ENCODE measurements at regions of chr5 and their contacts with region 1.

Region 1: GRCh38 chr5:141960449-141961202 is 2.6 kb upstream of the PCDH12 start:
- DNase-seq: peak; percentile 94
- ATAC-seq: peak; percentile 88
- H3K4me3 Mint-ChIP-seq: peak overlapping the region; percentile 44
- H3K27ac Mint-ChIP-seq: peak overlapping the region; percentile 80
- H3K4me1 Mint-ChIP-seq: peaks cover 45% of the 10 kb centered on the region
- H3K27me3 Mint-ChIP-seq: no peaks in the 10 kb centered on the region
- CTCF ChIP-seq: peak; percentile 62

Region 2: GRCh38 chr5:141664732-141665461 is 295.7 kb before region 1 on chr5:
- CTCF ChIA-PET with region 1: interaction called, 47 read pairs
- POLR2A ChIA-PET with region 1: no interaction called
- intact Hi-C with region 1: no loop called
- DNase-seq: peak; percentile 85
- ATAC-seq: peak; percentile 95
- H3K4me3 Mint-ChIP-seq: no peak overlapping the region
- H3K27ac Mint-ChIP-seq: no peak overlapping the region
- H3K4me1 Mint-ChIP-seq: peaks cover 3% of the 10 kb centered on the region
- H3K27me3 Mint-ChIP-seq: no peaks in the 10 kb centered on the region
- CTCF ChIP-seq: peak; percentile 89

Region 3: DNA sequence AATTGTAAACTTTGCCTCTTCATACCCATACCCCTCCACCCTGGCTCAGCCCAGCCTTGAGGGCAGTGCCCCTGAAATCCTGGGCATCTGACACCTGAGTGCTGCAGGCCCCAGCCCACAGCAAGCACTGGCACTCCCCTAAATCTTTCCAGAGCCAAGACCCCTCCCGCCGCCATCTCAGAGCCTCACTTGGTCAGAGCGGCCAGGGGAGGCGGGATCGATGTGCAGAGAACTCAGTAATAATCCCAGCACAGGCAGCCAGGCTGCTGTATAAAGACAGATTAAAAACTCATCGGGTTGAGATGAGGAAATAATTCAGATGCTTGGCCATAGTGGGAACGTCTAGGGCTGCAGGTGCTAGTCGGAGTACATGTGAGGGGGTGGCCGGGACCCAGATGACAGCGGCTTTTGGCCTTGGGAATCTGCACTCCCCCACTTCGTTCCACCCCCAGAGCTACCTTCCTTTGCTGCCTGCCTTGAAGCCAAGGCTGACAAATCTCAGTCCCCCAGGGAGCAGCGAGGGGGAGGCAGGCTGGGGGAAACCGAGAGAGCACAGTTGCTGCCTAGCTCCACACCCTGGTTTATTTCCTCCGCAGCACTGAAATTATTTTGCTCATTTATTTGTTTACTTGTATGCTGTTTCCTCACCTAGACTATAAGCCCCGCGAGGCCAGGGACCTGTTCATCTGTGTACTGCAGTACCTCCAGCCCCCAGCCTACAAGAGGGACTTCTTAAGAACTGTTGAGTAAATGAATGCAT is 259.1 kb before region 1 on chr5:
- CTCF ChIA-PET with region 1: interaction called, 204 read pairs
- POLR2A ChIA-PET with region 1: interaction called, 3 read pairs
- intact Hi-C with region 1: no loop called
- DNase-seq: peak; percentile 47
- ATAC-seq: peak; percentile 46
- H3K4me3 Mint-ChIP-seq: peak overlapping the region; percentile 56
- H3K27ac Mint-ChIP-seq: no peak overlapping the region
- H3K4me1 Mint-ChIP-seq: peaks cover 11% of the 10 kb centered on the region
- H3K27me3 Mint-ChIP-seq: peaks cover 32% of the 10 kb centered on the region
- CTCF ChIP-seq: no peak

Region 4: GRCh38 chr5:141889282-141889871 is 71.2 kb before region 1 on chr5:
- CTCF ChIA-PET with region 1: interaction called, 94 read pairs
- POLR2A ChIA-PET with region 1: no interaction called
- intact Hi-C with region 1: loop called (anchors 5 kb)
- DNase-seq: peak; percentile 16
- ATAC-seq: no peak
- H3K4me3 Mint-ChIP-seq: no peak overlapping the region
- H3K27ac Mint-ChIP-seq: no peak overlapping the region
- H3K4me1 Mint-ChIP-seq: no peaks in the 10 kb centered on the region
- H3K27me3 Mint-ChIP-seq: peaks cover 29% of the 10 kb centered on the region
- CTCF ChIP-seq: peak; percentile 32

Region 5: DNA sequence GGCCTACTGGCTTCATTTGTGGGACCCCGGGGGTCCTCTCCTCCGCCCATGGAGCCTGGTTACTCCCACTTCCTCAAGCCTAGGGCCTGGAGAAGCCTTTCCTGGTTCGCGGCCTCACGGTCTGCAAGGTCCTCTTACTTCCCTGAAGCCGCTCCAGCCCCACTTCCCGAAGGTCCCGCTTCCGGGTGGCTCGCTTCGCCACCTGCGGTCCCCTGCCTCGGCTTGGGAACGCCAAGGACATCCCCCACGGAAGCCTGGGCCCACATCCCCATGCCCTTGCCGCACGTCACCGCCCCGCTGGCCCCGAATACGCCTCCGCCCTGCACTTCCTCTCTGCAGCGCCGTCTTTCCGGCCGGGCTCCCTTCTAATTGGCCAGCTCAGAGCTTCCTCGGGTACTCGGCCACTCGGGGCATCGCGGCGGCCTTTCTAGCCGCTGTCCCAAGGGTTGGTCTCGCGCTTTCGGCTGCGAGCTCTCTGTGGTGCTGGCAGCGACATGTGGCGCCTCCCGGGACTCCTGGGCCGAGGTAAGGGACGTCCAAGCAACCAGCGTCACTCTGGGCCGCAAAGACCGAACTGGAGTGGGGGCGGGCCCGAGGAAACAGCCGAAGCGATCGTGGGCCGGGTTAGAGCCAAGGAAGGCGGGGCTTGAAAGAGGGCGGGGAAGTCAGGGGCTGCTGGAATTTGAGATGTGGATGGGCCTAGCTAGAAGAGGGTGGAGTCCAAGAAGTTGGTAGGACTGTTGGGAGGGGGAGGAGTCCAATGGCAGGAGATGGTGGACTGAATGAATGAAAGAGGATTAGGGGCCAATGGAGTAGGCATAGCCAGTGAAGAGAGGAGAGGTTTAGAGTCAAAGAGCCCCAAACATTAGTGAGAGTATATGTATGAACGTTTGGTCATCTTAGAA is 36.9 kb before region 1 on chr5 and contains the start of gene DELE1:
- CTCF ChIA-PET with region 1: interaction called, 42 read pairs
- POLR2A ChIA-PET with region 1: interaction called, 5 read pairs
- intact Hi-C with region 1: no loop called
- DNase-seq: peak; percentile 96
- ATAC-seq: peak; percentile 93
- H3K4me3 Mint-ChIP-seq: peak within 1 kb of the TSS; percentile 82
- H3K27ac Mint-ChIP-seq: peak within 1 kb of the TSS; percentile 91
- H3K4me1 Mint-ChIP-seq: peaks cover 24% of the 10 kb centered on the region
- H3K27me3 Mint-ChIP-seq: no peaks in the 10 kb centered on the region
- CTCF ChIP-seq: no peak
- total RNA-seq, gene DELE1: 50.1 to 57.4 TPM

Region 6: DNA sequence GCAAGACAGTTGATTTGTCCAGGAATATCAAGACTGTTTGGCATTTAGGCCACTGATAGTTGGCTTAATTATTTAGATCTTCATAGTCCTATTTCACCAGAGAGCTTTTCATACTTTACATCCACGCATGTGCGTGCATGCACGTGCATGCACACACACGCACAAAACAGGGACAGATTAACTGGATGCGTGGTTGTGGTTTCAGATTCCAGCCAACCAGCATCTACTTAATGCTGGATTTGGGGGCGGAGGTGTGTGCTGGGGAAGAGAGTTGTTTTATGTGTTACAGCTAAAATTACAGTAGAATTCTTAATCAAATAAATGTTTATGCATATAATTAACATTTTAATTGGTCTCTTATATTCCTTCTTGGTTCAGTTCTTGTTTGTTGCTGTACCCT is 15.6 kb after region 1 on chr5:
- CTCF ChIA-PET with region 1: interaction called, 126 read pairs
- POLR2A ChIA-PET with region 1: interaction called, 3 read pairs
- intact Hi-C with region 1: no loop called
- DNase-seq: no peak
- ATAC-seq: no peak
- H3K4me3 Mint-ChIP-seq: no peak overlapping the region
- H3K27ac Mint-ChIP-seq: no peak overlapping the region
- H3K4me1 Mint-ChIP-seq: peaks cover 29% of the 10 kb centered on the region
- H3K27me3 Mint-ChIP-seq: no peaks in the 10 kb centered on the region
- CTCF ChIP-seq: no peak